A673 (cell line): ENCODE measurements at regions of chr11 and their contacts with region 1.

Region 1: DNA sequence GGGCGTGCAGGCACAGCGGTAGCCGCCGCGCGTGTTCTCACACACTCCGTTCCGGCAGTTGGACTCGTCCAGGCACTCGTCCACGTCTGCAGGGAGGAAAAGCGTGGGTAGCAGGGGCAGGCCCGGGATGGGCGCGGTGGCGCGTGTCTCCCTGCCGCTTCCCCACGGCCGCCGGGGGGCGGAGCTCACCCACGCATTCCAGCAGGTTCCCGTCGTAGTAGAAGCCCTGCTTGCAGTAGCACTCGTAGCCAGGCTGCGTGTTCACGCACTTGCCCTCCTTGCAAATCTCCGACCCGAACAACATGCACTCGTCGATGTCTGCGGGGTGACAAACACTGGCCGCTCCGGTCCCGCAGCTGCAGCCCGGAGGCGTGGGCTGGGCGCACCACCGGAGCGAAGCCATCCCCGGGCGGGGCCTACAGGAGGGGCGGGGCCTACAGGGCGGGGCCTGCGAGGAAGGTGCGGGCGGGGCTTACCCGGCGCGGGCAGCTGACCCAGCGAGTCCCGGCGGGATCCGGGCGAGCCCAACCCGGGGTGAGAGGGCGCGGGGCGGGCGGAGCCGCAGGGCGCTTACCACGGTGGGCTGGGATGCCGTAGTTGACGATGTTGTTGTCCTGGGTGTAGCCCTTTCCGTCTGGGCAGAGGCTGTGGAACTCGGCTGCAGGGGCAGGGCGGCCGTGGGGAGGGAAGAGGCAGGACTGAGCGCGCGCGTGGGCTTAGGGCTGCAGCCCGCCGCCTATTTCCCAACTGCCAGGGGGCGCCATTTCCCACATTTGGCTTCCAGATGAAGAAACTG is 15.6 kb downstream of the SCYL1 start:
- DNase-seq: peak; percentile 95
- H3K4me3 ChIP-seq: peak overlapping the region; percentile 57
- H3K27ac ChIP-seq: peak overlapping the region; percentile 52
- H3K4me1 ChIP-seq: peaks cover 10% of the 10 kb centered on the region
- H3K27me3 ChIP-seq: no peaks in the 10 kb centered on the region
- CTCF ChIP-seq: peak; percentile 92

Region 2: DNA sequence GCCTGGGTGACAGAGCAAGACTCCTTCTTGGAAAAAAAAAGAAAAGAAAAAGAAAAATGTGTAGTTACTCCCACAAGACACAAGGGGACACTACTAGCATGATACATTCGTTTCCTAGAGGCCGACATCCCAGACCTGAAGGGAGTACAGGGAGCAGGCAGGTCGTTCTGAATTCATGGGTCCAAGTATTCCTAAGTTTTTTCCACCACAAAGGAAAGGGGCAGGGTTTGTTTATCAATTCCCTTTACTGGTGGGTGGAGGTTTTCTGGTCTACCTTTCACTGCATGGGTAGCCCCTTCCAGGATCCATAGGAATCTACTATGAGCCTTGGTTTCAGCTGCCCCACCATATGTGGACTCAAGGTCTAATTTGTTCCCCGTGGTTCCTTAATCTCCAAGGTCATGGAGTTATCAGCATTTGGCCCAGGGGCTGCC is 174.1 kb before region 1 on chr11:
- CTCF ChIA-PET with region 1: no interaction called
- POLR2A ChIA-PET with region 1: no interaction called
- intact Hi-C with region 1: no loop called
- DNase-seq: peak; percentile 92
- H3K4me3 ChIP-seq: no peak overlapping the region
- H3K27ac ChIP-seq: no peak overlapping the region
- H3K4me1 ChIP-seq: no peaks in the 10 kb centered on the region
- H3K27me3 ChIP-seq: no peaks in the 10 kb centered on the region
- CTCF ChIP-seq: peak; percentile 72

Region 3: DNA sequence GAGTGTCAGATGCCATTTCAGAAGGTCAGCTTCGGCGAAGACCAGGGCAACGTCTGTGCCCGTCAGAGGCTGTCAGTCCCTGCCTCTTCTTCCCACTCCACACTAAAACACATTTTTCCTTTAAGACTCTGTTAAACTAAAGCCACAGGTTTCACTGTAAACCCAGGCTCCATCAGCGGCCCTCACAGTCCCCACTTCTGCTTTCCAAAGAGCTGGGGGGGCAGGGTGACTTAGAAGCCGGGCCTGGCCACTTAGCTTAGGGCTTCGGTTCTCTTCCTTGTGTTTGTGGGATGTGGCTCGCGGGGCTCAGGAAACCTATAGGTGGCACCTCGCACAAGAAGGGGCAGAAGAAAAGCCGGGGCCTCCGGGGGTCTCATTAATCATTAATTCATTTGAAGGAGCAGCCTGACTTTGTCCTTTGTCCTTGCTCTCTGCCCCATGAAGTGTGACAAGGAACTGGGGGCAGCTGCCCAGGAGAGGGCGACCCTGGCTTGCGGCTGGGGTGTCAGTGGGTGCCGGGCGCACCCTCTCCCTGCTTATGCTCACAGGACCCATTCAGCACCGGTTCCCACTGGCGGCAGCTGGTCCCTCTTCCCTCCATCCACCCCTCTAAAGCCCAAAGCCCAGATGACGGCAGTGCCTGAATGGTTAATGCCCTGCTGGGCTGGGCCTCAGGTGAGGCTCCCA is 162.1 kb before region 1 on chr11:
- CTCF ChIA-PET with region 1: no interaction called
- POLR2A ChIA-PET with region 1: no interaction called
- intact Hi-C with region 1: no loop called
- DNase-seq: no peak
- H3K4me3 ChIP-seq: no peak overlapping the region
- H3K27ac ChIP-seq: peak overlapping the region; percentile 21
- H3K4me1 ChIP-seq: peaks cover 19% of the 10 kb centered on the region
- H3K27me3 ChIP-seq: no peaks in the 10 kb centered on the region
- CTCF ChIP-seq: 0 out of 2 replicates have a peak, but pooled peaks have one; percentile 17

Region 4: GRCh38 chr11:65391007-65391406 is 149.5 kb before region 1 on chr11:
- CTCF ChIA-PET with region 1: no interaction called
- POLR2A ChIA-PET with region 1: interaction called, 16 read pairs
- intact Hi-C with region 1: no loop called
- DNase-seq: peak; percentile 69
- H3K4me3 ChIP-seq: peak overlapping the region; percentile 35
- H3K27ac ChIP-seq: peak overlapping the region; percentile 89
- H3K4me1 ChIP-seq: peaks cover 39% of the 10 kb centered on the region
- H3K27me3 ChIP-seq: no peaks in the 10 kb centered on the region
- CTCF ChIP-seq: no peak

Region 5: GRCh38 chr11:65593518-65594298 is 53.2 kb after region 1 on chr11:
- CTCF ChIA-PET with region 1: interaction called, 11 read pairs
- POLR2A ChIA-PET with region 1: no interaction called
- intact Hi-C with region 1: no loop called
- DNase-seq: peak; percentile 55
- H3K4me3 ChIP-seq: no peak overlapping the region
- H3K27ac ChIP-seq: no peak overlapping the region
- H3K4me1 ChIP-seq: peaks cover 5% of the 10 kb centered on the region
- H3K27me3 ChIP-seq: no peaks in the 10 kb centered on the region
- CTCF ChIP-seq: peak; percentile 79